AG04449 (cell line): ENCODE measurements at regions of chr13 and their contacts with region 1.

Region 1: GRCh38 chr13:26985285-26985878 is 186.2 kb downstream of the USP12 start:
- DNase-seq: peak; percentile 29
- H3K4me3 ChIP-seq: no peak overlapping the region
- CTCF ChIP-seq: peak; percentile 66

Region 2: GRCh38 chr13:25301347-25302047 is 1683.9 kb before region 1 on chr13 and contains the start of gene NUP58:
- CTCF ChIA-PET with region 1: no interaction called
- POLR2A ChIA-PET with region 1: no interaction called
- DNase-seq: peak; percentile 71
- H3K4me3 ChIP-seq: peak within 1 kb of the TSS; percentile 93
- CTCF ChIP-seq: no peak

Region 3: GRCh38 chr13:26946684-26947343 is 38.6 kb before region 1 on chr13:
- CTCF ChIA-PET with region 1: interaction called, 18 read pairs
- POLR2A ChIA-PET with region 1: no interaction called
- DNase-seq: no peak
- H3K4me3 ChIP-seq: no peak overlapping the region
- CTCF ChIP-seq: peak; percentile 57

Region 4: DNA sequence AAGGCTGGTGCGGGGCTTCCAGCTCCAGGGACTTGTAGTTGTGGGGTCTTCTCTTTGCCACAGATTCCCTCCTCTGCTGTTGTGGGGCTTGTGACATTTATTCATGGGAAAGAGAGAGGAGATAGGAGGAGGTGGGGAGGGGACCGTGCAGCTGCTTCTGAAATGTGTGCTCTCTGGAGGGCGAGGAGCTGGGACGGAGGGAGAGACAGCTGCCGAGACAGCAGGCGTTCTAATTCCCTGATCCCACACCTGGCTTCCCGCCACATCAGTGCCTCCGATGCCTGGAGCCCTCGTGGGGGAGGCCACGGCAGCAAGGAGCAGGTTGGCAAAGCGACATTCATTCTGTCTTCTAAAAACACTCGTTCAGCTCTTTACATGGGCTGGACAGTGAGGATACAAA is 21.8 kb after region 1 on chr13:
- CTCF ChIA-PET with region 1: interaction called, 17 read pairs
- POLR2A ChIA-PET with region 1: no interaction called
- DNase-seq: no peak
- H3K4me3 ChIP-seq: no peak overlapping the region; the same call in 1 of the 2 replicates
- CTCF ChIP-seq: no peak

Region 5: DNA sequence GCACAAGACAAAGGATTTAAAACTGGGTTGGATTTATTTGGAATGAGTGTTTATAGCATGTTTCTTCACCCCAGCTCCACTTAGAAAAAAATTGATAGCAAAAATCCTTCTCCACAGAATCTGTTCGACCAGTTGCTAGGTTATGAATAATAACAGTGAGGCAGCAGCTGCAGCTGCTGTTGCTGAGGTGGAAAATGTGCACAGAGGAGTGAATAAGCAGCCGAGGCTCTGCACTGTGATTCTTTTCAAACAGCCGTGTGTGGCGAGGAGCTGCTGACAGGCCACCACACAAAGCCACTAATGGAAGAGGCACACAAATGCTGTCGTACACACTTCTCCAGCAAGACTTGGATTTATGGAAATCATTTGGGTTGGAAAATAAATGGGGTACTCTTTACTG is 278.8 kb after region 1 on chr13:
- CTCF ChIA-PET with region 1: interaction called, 16 read pairs
- POLR2A ChIA-PET with region 1: no interaction called
- DNase-seq: no peak
- H3K4me3 ChIP-seq: no peak overlapping the region
- CTCF ChIP-seq: no peak

Region 6: GRCh38 chr13:27283906-27284493 is 298.6 kb after region 1 on chr13:
- CTCF ChIA-PET with region 1: interaction called, 63 read pairs
- POLR2A ChIA-PET with region 1: no interaction called
- DNase-seq: no peak
- H3K4me3 ChIP-seq: no peak overlapping the region
- CTCF ChIP-seq: peak; percentile 48

Region 7: DNA sequence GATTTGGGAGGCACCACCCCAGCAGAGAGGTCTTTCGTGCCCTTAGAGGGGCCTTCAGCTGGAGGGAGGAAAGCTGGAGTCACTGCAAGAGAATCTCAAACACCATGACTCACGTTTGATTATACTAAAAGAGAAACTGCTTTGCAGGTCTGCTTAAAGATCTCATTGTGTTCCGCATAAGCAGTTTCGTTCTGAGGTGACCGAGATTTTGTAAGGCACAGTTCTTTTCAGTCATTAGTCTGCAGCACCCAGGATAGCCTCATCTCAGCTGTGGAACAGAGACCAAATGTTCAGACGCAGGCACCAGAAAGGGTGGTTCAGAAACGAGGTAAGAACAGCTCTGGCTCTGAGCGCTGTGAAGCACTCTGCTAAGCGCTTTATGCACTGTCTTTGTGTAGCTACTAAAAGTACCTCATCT is 367.8 kb after region 1 on chr13:
- CTCF ChIA-PET with region 1: interaction called, 457 read pairs
- POLR2A ChIA-PET with region 1: no interaction called
- DNase-seq: no peak
- H3K4me3 ChIP-seq: no peak overlapping the region; the same call in 1 of the 2 replicates
- CTCF ChIP-seq: no peak